Cardiac septum (tissue), 1 donor: ENCODE measurements at regions of chr4 and their contacts with region 1.

Region 1: DNA sequence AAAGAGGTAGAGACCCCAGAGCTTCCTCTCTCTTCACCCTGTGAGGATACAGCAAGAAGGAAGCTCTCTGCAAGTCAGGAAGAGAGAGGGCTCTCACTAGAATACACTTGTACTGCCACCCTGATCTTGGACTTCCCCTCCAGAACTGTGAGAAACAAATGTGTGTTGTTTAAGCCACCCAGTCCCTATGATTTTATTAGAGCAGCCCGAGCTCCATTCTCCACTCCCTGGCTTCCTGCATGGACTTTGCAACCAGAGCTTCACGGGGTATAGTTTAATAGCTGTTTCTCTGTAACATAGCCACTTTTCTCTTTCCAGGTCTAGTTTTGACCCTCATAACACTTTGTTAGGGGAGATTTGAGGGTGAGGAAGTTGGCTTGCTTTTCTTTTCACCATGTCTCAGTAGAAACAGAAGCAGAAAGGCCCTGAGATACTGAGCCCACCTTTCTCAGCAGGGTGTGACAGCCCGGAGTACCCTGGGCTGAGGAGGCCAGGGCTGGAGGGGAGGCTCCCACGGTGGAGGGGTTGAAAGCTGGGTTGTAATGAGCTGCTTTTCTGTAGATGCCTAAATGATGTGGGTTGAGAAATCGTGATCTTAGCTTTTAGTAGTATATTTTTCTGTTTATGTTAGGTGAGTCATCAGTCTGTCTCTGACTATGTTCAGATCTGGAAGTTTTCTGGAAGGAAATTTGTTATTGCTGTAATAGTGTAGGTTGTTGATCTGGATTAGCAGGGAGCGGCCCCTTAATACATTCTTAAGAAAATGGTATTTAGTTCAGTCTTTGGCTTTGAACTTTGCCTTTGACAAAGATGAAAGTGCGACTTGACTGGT is 118.6 kb downstream of the PTTG2 start:
- DNase-seq: no peak

Region 2: DNA sequence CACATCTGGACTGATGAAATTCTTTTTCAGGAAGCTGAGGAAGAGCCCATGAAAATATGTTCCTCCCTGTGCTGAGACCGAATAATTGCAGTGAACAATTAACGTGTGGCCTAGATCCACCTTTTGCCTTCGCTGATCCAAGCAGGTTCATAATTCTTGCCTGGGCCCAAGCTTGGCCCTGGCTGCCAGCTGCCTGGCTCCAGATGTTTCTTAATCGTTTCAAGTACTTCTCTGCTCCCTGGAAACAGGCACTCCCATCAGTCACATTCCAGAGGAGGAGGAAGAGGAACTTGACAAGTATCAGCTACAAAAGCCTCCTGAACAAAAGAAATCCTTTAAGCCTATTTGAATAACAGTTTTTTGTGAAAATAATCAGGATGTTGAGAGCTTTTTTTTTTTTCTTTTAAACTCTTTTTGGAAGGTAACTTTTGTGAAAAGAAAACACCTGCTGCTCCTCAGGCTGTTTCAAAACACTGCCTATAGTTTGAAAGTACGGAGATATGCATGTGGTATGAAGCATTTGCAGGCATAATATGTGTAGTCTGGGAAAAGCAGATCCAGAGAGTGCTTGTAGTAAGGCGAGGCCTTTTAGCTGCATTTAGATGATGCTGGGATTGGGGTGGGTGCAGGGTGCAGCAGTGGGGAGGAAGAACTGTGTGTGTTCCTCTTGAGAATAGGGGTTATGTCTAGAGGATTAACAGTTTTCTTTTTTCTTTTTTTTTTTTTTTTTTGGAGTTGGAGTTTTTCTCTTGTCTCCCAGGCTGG is 35.8 kb after region 1 on chr4:
- intact Hi-C with region 1: loop called (anchors 5 kb)
- DNase-seq: no peak

Region 3: GRCh38 chr4:38154681-38155608 is 76.1 kb after region 1 on chr4:
- intact Hi-C with region 1: loop called (anchors 5 kb)
- DNase-seq: no peak